ENCODE measurements at regions of chr7 and their contacts with region 1.

Region 1: GRCh38 chr7:73623798-73624668 is at the start of gene MLXIPL:
- DNase-seq: peak; percentile 88
- H3K4me3 Mint-ChIP-seq: peak within 1 kb of the TSS; percentile 34
- H3K27ac Mint-ChIP-seq: no peak within 1 kb of the TSS
- H3K4me1 Mint-ChIP-seq: peaks cover 4% of the 10 kb centered on the region
- H3K27me3 Mint-ChIP-seq: peaks cover 55% of the 10 kb centered on the region
- total RNA-seq, gene MLXIPL: not detected in 2 replicates

Region 2: GRCh38 chr7:73667344-73668102 is 43.5 kb after region 1 on chr7 and contains the start of gene VPS37D:
- intact Hi-C with region 1: loop called (anchors 1 kb)
- DNase-seq: peak; percentile 98
- H3K4me3 Mint-ChIP-seq: peak within 1 kb of the TSS; percentile 81
- H3K27ac Mint-ChIP-seq: no peak within 1 kb of the TSS
- H3K4me1 Mint-ChIP-seq: peaks cover 13% of the 10 kb centered on the region
- H3K27me3 Mint-ChIP-seq: peaks cover 46% of the 10 kb centered on the region
- total RNA-seq, gene VPS37D: 0.40 and 0.47 TPM in 2 replicates